ENCODE measurements at regions of chr2 and their contacts with region 1.

Region 1: DNA sequence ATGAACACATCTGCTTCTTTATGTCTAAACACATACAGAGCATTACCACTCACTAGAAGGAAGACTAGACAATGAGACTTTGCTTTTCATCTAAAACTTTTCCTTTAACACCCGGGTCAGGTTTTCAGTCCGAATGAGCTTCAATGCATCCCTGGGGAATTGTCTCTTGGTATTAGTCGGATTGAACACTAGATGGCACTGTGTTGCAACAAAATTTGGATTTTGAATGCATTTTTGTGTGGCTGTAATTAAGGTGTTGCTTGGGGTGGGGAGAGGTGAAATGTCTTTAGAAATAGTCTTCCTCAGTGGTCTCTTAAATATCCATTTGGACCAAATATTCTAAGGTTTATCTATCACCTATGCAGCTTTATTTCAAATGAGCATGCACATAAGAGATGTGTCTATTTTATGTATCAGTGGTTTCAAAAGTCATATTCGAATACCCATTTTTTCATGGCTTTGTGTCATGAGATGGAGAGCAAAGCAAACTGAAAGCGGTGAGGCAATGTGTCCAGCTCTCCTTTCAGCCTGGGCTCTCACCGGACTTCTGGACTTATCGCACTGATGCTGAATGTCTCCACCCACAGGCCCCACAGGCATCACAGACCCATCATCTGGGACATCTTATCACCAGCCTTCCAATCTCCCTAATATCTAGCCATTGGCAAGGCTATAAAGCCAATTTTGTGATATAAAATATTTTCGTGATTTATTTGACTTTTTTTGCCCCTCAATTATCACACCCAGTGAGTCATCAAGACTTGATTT is 510.3 kb downstream of the RNF144A start:
- DNase-seq: peak; percentile 36
- H3K4me3 Mint-ChIP-seq: peak overlapping the region; percentile 2
- H3K27ac Mint-ChIP-seq: peak overlapping the region; percentile 69
- H3K4me1 Mint-ChIP-seq: peaks cover 48% of the 10 kb centered on the region
- H3K27me3 Mint-ChIP-seq: peaks cover 3% of the 10 kb centered on the region

Region 2: GRCh38 chr2:7467782-7468447 is 40.4 kb after region 1 on chr2:
- intact Hi-C with region 1: loop called (anchors 1 kb)
- DNase-seq: peak; percentile 44
- H3K4me3 Mint-ChIP-seq: peak overlapping the region; percentile 50
- H3K27ac Mint-ChIP-seq: peak overlapping the region; percentile 91
- H3K4me1 Mint-ChIP-seq: peaks cover 51% of the 10 kb centered on the region
- H3K27me3 Mint-ChIP-seq: no peaks in the 10 kb centered on the region

Region 3: GRCh38 chr2:7620255-7620654 is 192.8 kb after region 1 on chr2:
- intact Hi-C with region 1: loop called (anchors 1 kb)
- DNase-seq: no peak
- H3K4me3 Mint-ChIP-seq: no peak overlapping the region
- H3K27ac Mint-ChIP-seq: no peak overlapping the region
- H3K4me1 Mint-ChIP-seq: peaks cover 26% of the 10 kb centered on the region
- H3K27me3 Mint-ChIP-seq: no peaks in the 10 kb centered on the region

Region 4: GRCh38 chr2:7725171-7725849 is 297.8 kb after region 1 on chr2:
- intact Hi-C with region 1: loop called (anchors 1 kb)
- DNase-seq: peak; percentile 64
- H3K4me3 Mint-ChIP-seq: peak overlapping the region; percentile 87
- H3K27ac Mint-ChIP-seq: peak overlapping the region; percentile 95
- H3K4me1 Mint-ChIP-seq: peaks cover 73% of the 10 kb centered on the region
- H3K27me3 Mint-ChIP-seq: no peaks in the 10 kb centered on the region

Region 5: GRCh38 chr2:7984693-7985353 is 557.3 kb after region 1 on chr2:
- intact Hi-C with region 1: loop called (anchors 1 kb)
- DNase-seq: no peak
- H3K4me3 Mint-ChIP-seq: peak overlapping the region; percentile 12
- H3K27ac Mint-ChIP-seq: peak overlapping the region; percentile 82
- H3K4me1 Mint-ChIP-seq: peaks cover 28% of the 10 kb centered on the region
- H3K27me3 Mint-ChIP-seq: no peaks in the 10 kb centered on the region

Region 6: DNA sequence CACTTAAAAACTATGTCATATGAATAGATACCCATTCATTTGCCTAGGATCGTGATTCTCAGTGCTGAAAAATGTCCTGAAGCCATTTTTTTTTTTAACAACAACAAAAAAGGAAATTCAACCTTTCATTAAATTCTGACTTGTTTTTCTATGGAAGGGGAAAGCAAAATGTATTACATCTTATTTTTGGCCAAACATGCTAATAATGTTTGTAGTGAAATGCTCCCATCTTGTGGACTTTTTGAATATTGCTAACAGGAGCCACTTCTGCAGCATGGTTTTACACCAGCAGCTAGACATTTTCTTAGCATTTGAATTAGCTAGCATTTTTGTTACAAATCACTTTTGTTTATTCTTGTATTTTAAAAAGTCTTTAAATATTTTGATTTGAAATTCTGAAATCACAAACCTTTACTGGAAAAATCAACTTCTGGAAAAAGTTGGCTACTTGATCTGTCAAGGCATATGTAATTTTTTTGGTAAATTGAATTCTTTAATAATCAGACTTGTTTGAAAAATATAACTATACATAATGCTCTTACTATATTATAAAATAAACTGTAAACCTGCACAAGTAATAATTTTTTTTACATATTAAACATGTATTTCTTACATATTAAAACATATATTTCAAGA is 1334.2 kb after region 1 on chr2:
- intact Hi-C with region 1: loop called (anchors 5 kb)
- DNase-seq: no peak
- H3K4me3 Mint-ChIP-seq: no peak overlapping the region
- H3K27ac Mint-ChIP-seq: no peak overlapping the region
- H3K4me1 Mint-ChIP-seq: no peaks in the 10 kb centered on the region
- H3K27me3 Mint-ChIP-seq: no peaks in the 10 kb centered on the region